Sigmoid colon (tissue), 7 donors: ENCODE measurements at regions of chr4 and their contacts with region 1.

Region 1: GRCh38 chr4:89836897-89837384 is at the start of gene SNCA:
- DNase-seq: peak; percentile 90
- H3K4me3 ChIP-seq: peak within 1 kb of the TSS; percentile 31 to 62 (median 52)
- H3K27ac ChIP-seq: peak within 1 kb of the TSS; percentile 54 to 77 (median 70)
- H3K4me1 ChIP-seq: peaks cover 0 to 24% (median 19%) of the 10 kb centered on the region in 4 donors
- H3K27me3 ChIP-seq: peaks cover 9 to 62% (median 10%) of the 10 kb centered on the region in 3 donors
- CTCF ChIP-seq: no peak
- EP300 ChIP-seq: no peak
- POLR2A ChIP-seq: no peak
- total RNA-seq, gene SNCA: 16.8 to 27.0 (median 23.2) TPM

Region 2: DNA sequence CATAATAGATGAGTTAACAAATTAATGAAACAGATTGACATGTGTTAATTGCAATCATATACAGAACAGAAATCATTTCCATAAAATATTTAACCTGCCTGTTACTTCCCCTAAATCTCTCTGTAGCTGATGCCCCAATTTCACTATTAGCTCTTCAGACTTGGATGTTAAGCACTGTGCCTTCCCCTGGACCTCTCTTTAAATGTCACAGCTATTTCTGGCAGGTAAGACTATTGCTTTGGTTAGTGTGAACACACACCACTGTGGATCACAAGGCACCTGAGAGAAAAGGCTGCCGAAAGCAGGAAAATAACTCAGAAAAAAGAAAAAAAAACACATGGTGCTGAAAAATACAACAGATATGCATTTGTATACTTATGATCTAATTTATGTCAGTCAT is 91.2 kb before region 1 on chr4:
- intact Hi-C with region 1: loop called (anchors 5 kb)
- DNase-seq: no peak
- H3K4me3 ChIP-seq: no peak overlapping the region
- H3K27ac ChIP-seq: peak overlapping the region in 1 of 4 donors; percentile 11
- H3K4me1 ChIP-seq: no peaks in the 10 kb centered on the region
- H3K27me3 ChIP-seq: no peaks in the 10 kb centered on the region
- CTCF ChIP-seq: no peak
- EP300 ChIP-seq: no peak
- POLR2A ChIP-seq: no peak

Region 3: DNA sequence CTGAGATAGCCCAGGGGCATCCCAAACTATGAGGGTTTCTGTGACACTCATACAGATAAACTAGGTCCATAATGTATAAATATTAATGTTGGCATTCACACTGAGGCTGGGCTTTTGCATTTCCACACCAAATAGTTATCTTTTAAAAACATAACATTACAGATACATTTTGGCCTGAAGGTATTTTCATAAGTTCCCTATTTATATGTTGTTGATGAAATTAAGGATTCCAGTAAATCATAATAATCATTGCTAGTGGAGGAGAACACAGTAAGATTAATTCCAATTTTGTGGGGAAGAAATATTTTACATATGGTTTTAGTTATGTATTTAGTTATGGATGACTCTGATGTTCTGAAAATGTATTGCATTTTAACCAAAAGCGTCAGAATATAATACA is 769.8 kb after region 1 on chr4:
- intact Hi-C with region 1: no loop called
- DNase-seq: no peak
- H3K4me3 ChIP-seq: no peak overlapping the region
- H3K27ac ChIP-seq: no peak overlapping the region
- H3K4me1 ChIP-seq: no peaks in the 10 kb centered on the region
- H3K27me3 ChIP-seq: no peaks in the 10 kb centered on the region
- CTCF ChIP-seq: no peak
- EP300 ChIP-seq: no peak
- POLR2A ChIP-seq: no peak